GM12878 (cell line): ENCODE measurements at regions of chr11 and their contacts with region 1.

Region 1: DNA sequence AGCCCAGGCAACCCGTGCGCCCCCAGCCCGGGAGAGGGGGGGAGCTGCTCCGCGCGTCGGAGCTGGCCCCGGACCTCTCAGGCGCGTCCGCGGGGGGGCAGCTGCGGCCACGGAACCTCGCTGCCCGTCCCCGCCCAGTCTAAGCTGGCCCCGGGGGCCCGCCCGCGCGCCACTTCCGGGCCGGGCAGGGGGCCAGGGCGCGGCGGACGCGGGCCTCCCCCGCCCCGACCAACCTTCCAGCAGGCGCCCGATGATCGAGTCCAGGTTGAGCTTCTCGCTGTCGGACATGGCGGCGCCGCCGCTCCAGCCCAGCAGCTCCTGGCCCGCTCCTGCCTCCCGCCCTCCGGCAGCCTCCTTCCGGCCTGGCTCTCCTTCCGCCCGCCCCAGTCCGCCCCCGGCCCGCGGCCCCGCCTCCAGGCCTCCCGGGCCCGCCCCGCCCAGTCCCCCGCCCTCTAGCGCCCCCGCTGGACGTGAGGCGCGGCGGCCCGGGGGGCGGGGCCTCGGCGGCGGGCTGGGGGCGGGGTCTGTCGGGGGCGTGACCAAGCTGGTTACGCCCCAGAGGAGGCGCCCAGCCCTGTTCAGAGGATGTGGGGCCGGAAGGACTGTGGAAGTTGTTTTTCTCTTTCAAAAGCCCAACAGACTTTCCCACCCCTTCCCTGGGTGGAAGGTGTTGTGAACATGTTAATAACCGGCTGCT is at the start of gene PPP1CA:
- DNase-seq: no peak
- ATAC-seq: peak; percentile 77
- H3K4me3 ChIP-seq: peak within 1 kb of the TSS; percentile 80
- H3K27ac ChIP-seq: peak within 1 kb of the TSS; percentile 99
- H3K4me1 ChIP-seq: peaks cover 50% of the 10 kb centered on the region
- H3K27me3 ChIP-seq: no peaks in the 10 kb centered on the region
- CTCF ChIP-seq: peak in 2 of 3 experiments; percentile 36 to 41; a peak in 3 of 6 replicates
- EP300 ChIP-seq: no peak
- POLR2A ChIP-seq: peak; percentile 96
- RAD21 ChIP-seq: peak; percentile 31; the same call in 1 of the 2 replicates
- polyA plus RNA-seq, gene PPP1CA: 26.4 to 41.7 TPM

Region 2: GRCh38 chr11:67178878-67179277 is 222.8 kb before region 1 on chr11:
- CTCF ChIA-PET with region 1: no interaction called
- POLR2A ChIA-PET with region 1: no interaction called
- RAD21 ChIA-PET with region 1: no interaction called
- SMC1A ChIA-PET with region 1: no interaction called
- in situ Hi-C with region 1: no loop called
- intact Hi-C with region 1: no loop called
- DNase-seq: no peak
- ATAC-seq: no peak
- H3K4me3 ChIP-seq: no peak overlapping the region
- H3K27ac ChIP-seq: no peak overlapping the region
- H3K4me1 ChIP-seq: no peaks in the 10 kb centered on the region
- H3K27me3 ChIP-seq: no peaks in the 10 kb centered on the region
- CTCF ChIP-seq: no peak
- EP300 ChIP-seq: no peak
- POLR2A ChIP-seq: no peak
- RAD21 ChIP-seq: no peak

Region 3: GRCh38 chr11:67322710-67323109 is 78.9 kb before region 1 on chr11:
- CTCF ChIA-PET with region 1: no interaction called
- POLR2A ChIA-PET with region 1: no interaction called
- RAD21 ChIA-PET with region 1: no interaction called
- SMC1A ChIA-PET with region 1: no interaction called
- in situ Hi-C with region 1: no loop called
- intact Hi-C with region 1: no loop called
- DNase-seq: no peak
- ATAC-seq: no peak
- H3K4me3 ChIP-seq: no peak overlapping the region
- H3K27ac ChIP-seq: no peak overlapping the region
- H3K4me1 ChIP-seq: peaks cover 3% of the 10 kb centered on the region
- H3K27me3 ChIP-seq: no peaks in the 10 kb centered on the region
- CTCF ChIP-seq: no peak
- EP300 ChIP-seq: no peak
- POLR2A ChIP-seq: no peak
- RAD21 ChIP-seq: no peak

Region 4: GRCh38 chr11:67382276-67383136 is 19.1 kb before region 1 on chr11:
- CTCF ChIA-PET with region 1: interaction called, 21 read pairs
- POLR2A ChIA-PET with region 1: interaction called, 11 read pairs
- RAD21 ChIA-PET with region 1: interaction called, 16 read pairs
- SMC1A ChIA-PET with region 1: interaction called, 11 read pairs
- in situ Hi-C with region 1: no loop called
- intact Hi-C with region 1: no loop called
- DNase-seq: no peak
- ATAC-seq: peak; percentile 93
- H3K4me3 ChIP-seq: no peak overlapping the region
- H3K27ac ChIP-seq: no peak overlapping the region
- H3K4me1 ChIP-seq: peaks cover 19% of the 10 kb centered on the region
- H3K27me3 ChIP-seq: peaks cover 0 to 3% of the 10 kb centered on the region in 2 experiments; a peak in 2 of 4 replicates
- CTCF ChIP-seq: peak; percentile 99; a peak in 5 of 6 replicates
- EP300 ChIP-seq: no peak
- POLR2A ChIP-seq: no peak
- RAD21 ChIP-seq: peak; percentile 99

Region 5: GRCh38 chr11:67420646-67421420 is 19.2 kb after region 1 on chr11:
- CTCF ChIA-PET with region 1: interaction called, 6 read pairs
- POLR2A ChIA-PET with region 1: interaction called, 28 read pairs
- RAD21 ChIA-PET with region 1: interaction called, 8 read pairs
- SMC1A ChIA-PET with region 1: interaction called, 7 read pairs
- in situ Hi-C with region 1: no loop called
- intact Hi-C with region 1: no loop called
- DNase-seq: no peak
- ATAC-seq: peak; percentile 94
- H3K4me3 ChIP-seq: peak overlapping the region; percentile 71
- H3K27ac ChIP-seq: no peak overlapping the region; the same call in 1 of the 2 replicates
- H3K4me1 ChIP-seq: peaks cover 2% of the 10 kb centered on the region; the same call in 1 of the 2 replicates
- H3K27me3 ChIP-seq: peaks cover 0 to 3% of the 10 kb centered on the region in 2 experiments; a peak in 2 of 4 replicates
- CTCF ChIP-seq: no peak
- EP300 ChIP-seq: no peak
- POLR2A ChIP-seq: peak; percentile 77
- RAD21 ChIP-seq: no peak

Region 6: GRCh38 chr11:67439321-67439883 is 37.8 kb after region 1 on chr11:
- CTCF ChIA-PET with region 1: interaction called, 53 read pairs
- POLR2A ChIA-PET with region 1: interaction called, 95 read pairs
- RAD21 ChIA-PET with region 1: interaction called, 112 read pairs
- SMC1A ChIA-PET with region 1: interaction called, 46 read pairs
- in situ Hi-C with region 1: no loop called
- intact Hi-C with region 1: loop called (anchors 5 kb)
- DNase-seq: no peak
- ATAC-seq: no peak
- H3K4me3 ChIP-seq: peak overlapping the region; percentile 90
- H3K27ac ChIP-seq: peak overlapping the region; percentile 99
- H3K4me1 ChIP-seq: peaks cover 29% of the 10 kb centered on the region
- H3K27me3 ChIP-seq: no peaks in the 10 kb centered on the region
- CTCF ChIP-seq: peak; percentile 23 to 49 (median 24); a peak in 4 of 6 replicates
- EP300 ChIP-seq: no peak
- POLR2A ChIP-seq: no peak
- RAD21 ChIP-seq: no peak

Region 7: DNA sequence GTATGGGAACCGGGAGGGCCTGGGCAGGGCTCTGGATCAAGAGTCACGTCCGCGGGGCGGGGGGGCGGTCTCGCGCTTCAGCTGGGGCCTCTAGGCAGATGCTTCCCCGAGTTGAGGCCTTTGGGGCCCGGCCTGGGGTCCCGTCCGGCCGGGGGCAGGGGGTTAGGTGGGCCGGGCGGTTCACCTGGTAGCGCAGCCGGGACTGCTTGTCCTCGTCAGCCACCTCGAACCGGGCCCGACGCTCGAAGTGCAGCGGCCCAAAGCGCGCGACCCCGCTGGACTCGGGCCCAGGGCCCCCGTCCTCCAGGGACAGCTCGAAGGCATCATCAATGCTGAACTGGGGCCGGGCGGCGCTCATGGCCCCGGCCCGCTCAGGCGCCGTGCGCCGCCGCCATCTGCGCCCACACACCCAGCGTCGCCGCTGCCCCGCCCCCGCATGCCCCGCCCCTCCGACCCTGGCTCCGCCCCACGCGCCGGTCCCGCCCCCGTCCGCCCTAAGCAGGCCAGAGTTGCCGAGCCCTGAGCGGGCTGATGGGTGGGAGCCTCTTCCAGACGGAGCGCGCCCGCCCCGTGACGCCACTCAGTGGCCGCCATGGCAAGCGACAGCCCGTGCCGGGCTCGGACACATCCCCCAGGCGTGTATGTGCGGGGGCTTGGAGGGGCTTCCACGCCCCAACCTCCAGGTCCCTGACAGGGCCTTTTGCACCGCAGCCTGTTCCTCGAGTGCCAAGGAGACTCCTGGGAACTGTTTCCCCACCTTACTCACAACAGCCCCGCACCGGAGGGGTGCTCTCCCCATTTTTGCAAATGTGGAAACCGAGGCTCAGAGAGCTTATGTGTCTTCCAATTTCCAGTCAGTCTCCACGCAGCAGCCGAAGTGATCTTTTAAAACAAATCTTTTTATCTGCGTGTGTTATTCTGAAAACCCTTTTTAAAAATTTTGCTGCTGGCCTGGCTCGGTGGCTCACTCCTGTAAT is 67.5 kb after region 1 on chr11 and contains the start of gene TMEM134:
- CTCF ChIA-PET with region 1: interaction called, 36 read pairs
- POLR2A ChIA-PET with region 1: interaction called, 72 read pairs
- RAD21 ChIA-PET with region 1: interaction called, 72 read pairs
- SMC1A ChIA-PET with region 1: interaction called, 46 read pairs
- in situ Hi-C with region 1: no loop called
- intact Hi-C with region 1: loop called (anchors 2 kb)
- DNase-seq: peak; percentile 57
- ATAC-seq: peak; percentile 83
- H3K4me3 ChIP-seq: peak within 1 kb of the TSS; percentile 86
- H3K27ac ChIP-seq: peak within 1 kb of the TSS; percentile 78
- H3K4me1 ChIP-seq: peaks cover 33% of the 10 kb centered on the region
- H3K27me3 ChIP-seq: no peaks in the 10 kb centered on the region
- CTCF ChIP-seq: peak; percentile 45 to 76 (median 64)
- EP300 ChIP-seq: peak in 1 of 2 experiments; percentile 46; a peak in 1 of 4 replicates
- POLR2A ChIP-seq: peak; percentile 88
- RAD21 ChIP-seq: peak; percentile 65
- polyA plus RNA-seq, gene TMEM134: 1.6 to 7.0 TPM

Region 8: GRCh38 chr11:67507864-67508485 is 106.3 kb after region 1 on chr11 and contains the start of gene CDK2AP2:
- CTCF ChIA-PET with region 1: interaction called, 27 read pairs
- POLR2A ChIA-PET with region 1: interaction called, 4 read pairs
- RAD21 ChIA-PET with region 1: interaction called, 19 read pairs
- SMC1A ChIA-PET with region 1: interaction called, 5 read pairs
- in situ Hi-C with region 1: no loop called
- intact Hi-C with region 1: loop called (anchors 1 kb)
- DNase-seq: peak; percentile 99
- ATAC-seq: peak; percentile 86
- H3K4me3 ChIP-seq: peak within 1 kb of the TSS; percentile 82
- H3K27ac ChIP-seq: peak within 1 kb of the TSS; percentile 94
- H3K4me1 ChIP-seq: peaks cover 27% of the 10 kb centered on the region
- H3K27me3 ChIP-seq: no peaks in the 10 kb centered on the region; a peak in 1 of 4 replicates
- CTCF ChIP-seq: no peak
- EP300 ChIP-seq: no peak
- POLR2A ChIP-seq: peak; percentile 86
- RAD21 ChIP-seq: no peak
- polyA plus RNA-seq, gene CDK2AP2: 8.0 to 18.0 TPM